ENCODE measurements at regions of chr3 and their contacts with region 1.

Region 1: GRCh38 chr3:42749753-42750231 is 23.3 kb downstream of the CCDC13 start:
- DNase-seq: peak; percentile 35 to 69
- H3K4me3 ChIP-seq: no peak overlapping the region
- H3K27ac ChIP-seq: peak overlapping the region; percentile 63 to 80
- H3K4me1 ChIP-seq: peaks cover 0 to 60% (median 35%) of the 10 kb centered on the region in 4 donors
- H3K27me3 ChIP-seq: no peaks in the 10 kb centered on the region
- CTCF ChIP-seq: peak; percentile 61 to 62

Region 2: GRCh38 chr3:42502429-42503250 is 247.2 kb before region 1 on chr3 and contains the start of gene VIPR1:
- intact Hi-C with region 1: loop called (anchors 5 kb)
- DNase-seq: peak; percentile 67 to 89
- H3K4me3 ChIP-seq: peak within 1 kb of the TSS; percentile 51 to 68
- H3K27ac ChIP-seq: peak within 1 kb of the TSS; percentile 59 to 79
- H3K4me1 ChIP-seq: peaks cover 0 to 23% (median 20%) of the 10 kb centered on the region in 4 donors
- H3K27me3 ChIP-seq: no peaks in the 10 kb centered on the region
- CTCF ChIP-seq: no peak

Region 3: DNA sequence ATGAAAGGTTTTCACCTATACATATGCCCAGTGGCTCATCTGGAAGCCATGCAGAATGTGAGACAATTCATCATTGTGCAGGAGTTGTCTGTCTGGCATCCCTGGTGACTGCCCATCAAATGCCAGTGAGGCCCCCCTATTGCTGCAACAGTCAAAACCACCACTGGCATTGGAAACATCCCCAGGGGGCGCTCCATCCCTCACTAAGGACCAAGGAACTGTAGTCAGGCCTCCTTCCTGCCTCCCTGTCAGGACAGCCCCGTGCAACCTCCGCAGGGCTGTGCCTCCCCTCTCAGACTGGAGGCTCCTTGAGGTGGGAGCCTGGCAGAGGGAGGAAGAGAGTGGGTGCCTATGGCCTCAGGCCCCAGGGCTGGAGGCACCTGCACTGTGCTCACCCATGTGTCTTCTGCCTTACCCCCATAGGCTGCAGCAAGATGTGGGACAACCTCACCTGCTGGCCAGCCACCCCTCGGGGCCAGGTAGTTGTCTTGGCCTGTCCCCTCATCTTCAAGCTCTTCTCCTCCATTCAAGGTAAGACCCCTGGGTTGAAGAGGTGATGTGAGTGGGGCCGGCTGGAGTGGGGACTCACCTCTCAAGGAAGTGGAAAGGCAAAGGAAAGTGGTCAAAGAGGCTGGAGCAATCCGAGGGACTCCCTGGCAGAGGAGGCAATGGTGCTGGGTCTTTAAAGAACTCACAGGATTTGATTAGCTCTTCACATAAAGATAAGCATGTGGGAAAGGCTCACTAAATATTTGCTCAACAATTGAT is 230.8 kb before region 1 on chr3:
- intact Hi-C with region 1: no loop called
- DNase-seq: no peak
- H3K4me3 ChIP-seq: no peak overlapping the region
- H3K27ac ChIP-seq: no peak overlapping the region
- H3K4me1 ChIP-seq: peaks cover 4 to 37% (median 32%) of the 10 kb centered on the region in 4 donors
- H3K27me3 ChIP-seq: no peaks in the 10 kb centered on the region
- CTCF ChIP-seq: no peak

Region 4: DNA sequence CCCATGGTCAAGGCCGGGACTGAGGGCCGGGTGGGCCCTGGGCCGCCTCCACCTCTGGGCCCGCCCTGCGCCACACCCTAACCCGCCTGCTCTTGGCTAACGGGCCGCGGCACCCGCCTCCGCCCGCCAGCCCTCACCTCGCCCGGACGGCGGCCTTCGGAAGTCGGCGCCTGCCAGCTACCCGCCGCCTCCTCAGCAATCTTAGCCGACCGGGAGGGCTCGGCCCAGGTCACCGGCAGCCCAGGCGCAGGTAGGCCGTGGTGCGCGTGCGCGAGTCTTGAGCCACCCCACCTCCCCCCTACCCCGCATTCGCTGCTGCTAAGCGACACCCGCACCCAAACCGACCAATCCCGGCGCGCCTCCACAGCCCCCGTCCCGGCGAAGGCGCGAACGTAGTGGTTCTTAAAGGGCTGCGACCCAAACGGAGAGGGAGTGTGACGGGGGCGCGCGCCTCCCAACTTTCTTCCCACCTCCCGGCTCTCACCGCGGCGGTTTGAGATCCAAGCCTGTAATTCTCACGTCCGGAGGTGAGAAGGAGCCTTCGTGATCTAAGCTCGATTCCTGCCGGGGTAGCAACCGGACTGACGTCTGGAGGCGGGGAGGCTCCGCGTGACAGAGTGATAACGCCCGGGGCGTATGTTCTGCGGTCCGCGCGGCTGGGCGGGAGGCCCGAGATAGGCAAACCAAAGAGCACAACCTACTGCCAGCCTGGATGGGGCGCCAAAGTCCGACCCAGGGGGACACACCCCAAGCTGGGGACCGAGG is 167.9 kb before region 1 on chr3 and contains the start of gene SEC22C:
- intact Hi-C with region 1: loop called (anchors 5 kb)
- DNase-seq: peak; percentile 96 to 97
- H3K4me3 ChIP-seq: peak within 1 kb of the TSS; percentile 73 to 88
- H3K27ac ChIP-seq: peak within 1 kb of the TSS; percentile 86 to 93
- H3K4me1 ChIP-seq: peaks cover 0 to 20% (median 16%) of the 10 kb centered on the region in 4 donors
- H3K27me3 ChIP-seq: no peaks in the 10 kb centered on the region
- CTCF ChIP-seq: no peak

Region 5: GRCh38 chr3:42652611-42653302 is 97.0 kb before region 1 on chr3:
- intact Hi-C with region 1: loop called (anchors 2 kb)
- DNase-seq: peak; percentile 83 to 90
- H3K4me3 ChIP-seq: peak overlapping the region; percentile 89 to 95
- H3K27ac ChIP-seq: peak overlapping the region; percentile 95 to 99
- H3K4me1 ChIP-seq: peaks cover 0 to 83% (median 62%) of the 10 kb centered on the region in 4 donors
- H3K27me3 ChIP-seq: no peaks in the 10 kb centered on the region
- CTCF ChIP-seq: no peak